ENCODE measurements at regions of chr16 and their contacts with region 1.

Region 1: DNA sequence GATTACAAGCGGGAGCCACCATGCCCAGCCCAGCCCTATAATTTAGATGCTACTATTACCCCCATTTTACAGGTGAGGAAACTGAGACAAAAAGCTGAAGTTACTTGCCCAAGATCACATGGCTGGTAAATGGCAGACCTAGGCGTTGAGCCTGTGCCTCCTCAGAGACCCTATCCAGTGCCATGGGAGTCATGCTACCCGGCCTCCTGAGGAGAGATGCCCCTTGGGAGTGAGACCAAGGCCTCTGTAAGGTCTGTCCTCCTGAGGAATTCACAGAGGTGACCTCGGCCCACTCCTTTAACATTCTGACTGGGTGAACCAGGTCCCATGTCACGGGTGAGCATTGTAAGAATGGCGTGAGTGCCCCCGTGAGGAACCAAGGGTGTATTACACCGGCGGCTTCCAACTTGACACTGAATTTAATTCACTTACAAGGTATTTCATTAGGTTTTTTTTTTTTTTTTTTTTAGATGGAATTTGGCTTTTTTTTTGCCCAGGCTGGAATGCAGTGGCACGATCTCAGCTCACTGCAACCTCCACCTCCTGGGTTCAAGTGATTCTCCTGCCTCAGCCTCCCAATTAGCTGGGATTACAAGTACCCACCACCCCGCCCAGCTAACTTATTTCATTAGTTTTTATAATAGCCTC is 95.7 kb downstream of the ABCC6 start:
- DNase-seq: peak; percentile 55 to 83 (median 77)
- ATAC-seq: peak; percentile 81 to 86
- H3K4me3 ChIP-seq: no peak overlapping the region
- H3K27ac ChIP-seq: no peak overlapping the region
- H3K4me1 ChIP-seq: no peaks in the 10 kb centered on the region
- H3K27me3 ChIP-seq: no peaks in the 10 kb centered on the region

Region 2: GRCh38 chr16:15434425-15435215 is 693.0 kb before region 1 on chr16 and contains the start of gene BMERB1:
- intact Hi-C with region 1: no loop called
- DNase-seq: peak; percentile 86 to 94 (median 93)
- ATAC-seq: peak; percentile 96 to 97
- H3K4me3 ChIP-seq: peak within 1 kb of the TSS; percentile 69
- H3K27ac ChIP-seq: peak within 1 kb of the TSS; percentile 22
- H3K4me1 ChIP-seq: peaks cover 2% of the 10 kb centered on the region
- H3K27me3 ChIP-seq: no peaks in the 10 kb centered on the region
- total RNA-seq, gene BMERB1: 54.7 to 74.7 (median 60.8) TPM

Region 3: GRCh38 chr16:15874745-15875314 is 252.8 kb before region 1 on chr16:
- intact Hi-C with region 1: loop called (anchors 5 kb)
- DNase-seq: peak; percentile 49 to 77 (median 60)
- ATAC-seq: peak; percentile 82 to 84
- H3K4me3 ChIP-seq: no peak overlapping the region
- H3K27ac ChIP-seq: peak overlapping the region; percentile 85
- H3K4me1 ChIP-seq: peaks cover 2% of the 10 kb centered on the region
- H3K27me3 ChIP-seq: no peaks in the 10 kb centered on the region

Region 4: DNA sequence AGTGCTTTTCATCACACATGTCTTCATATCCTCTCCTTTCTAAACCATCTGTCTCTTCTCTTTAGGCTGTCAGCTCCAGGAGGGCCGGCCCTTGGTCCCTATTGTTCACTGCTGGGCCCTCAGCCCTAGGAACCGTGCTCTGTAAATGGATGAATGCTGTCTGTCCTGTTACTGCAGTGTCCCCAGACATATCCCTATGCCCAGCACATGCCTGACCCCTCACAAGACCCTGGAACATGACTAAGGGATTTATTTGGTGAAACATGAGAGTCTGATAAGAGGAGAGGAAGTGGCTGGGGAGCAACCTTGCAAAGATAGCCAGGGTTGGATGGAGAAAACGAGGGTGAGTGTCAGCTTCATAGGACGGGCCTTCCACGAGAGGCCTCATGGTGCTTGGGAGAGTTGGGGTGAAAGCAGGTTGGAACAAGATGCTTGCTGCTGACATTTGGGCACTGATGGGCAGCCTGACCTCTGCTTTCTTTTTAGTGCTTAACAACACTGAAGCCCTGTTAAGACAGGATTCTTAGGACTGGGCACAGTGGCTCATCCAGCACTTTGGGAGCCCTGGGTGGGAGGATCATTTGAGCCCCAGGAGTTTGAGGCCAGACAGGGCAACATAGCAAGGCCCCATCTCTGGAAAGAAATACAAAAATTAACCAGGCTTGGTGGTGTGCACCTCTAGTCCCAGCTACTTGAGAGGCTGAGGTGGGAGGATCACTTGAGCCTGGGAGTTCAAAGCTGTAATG is 139.2 kb before region 1 on chr16:
- intact Hi-C with region 1: no loop called
- DNase-seq: no peak
- ATAC-seq: peak; percentile 42 to 62
- H3K4me3 ChIP-seq: no peak overlapping the region
- H3K27ac ChIP-seq: peak overlapping the region; percentile 89
- H3K4me1 ChIP-seq: peaks cover 17% of the 10 kb centered on the region
- H3K27me3 ChIP-seq: no peaks in the 10 kb centered on the region

Region 5: DNA sequence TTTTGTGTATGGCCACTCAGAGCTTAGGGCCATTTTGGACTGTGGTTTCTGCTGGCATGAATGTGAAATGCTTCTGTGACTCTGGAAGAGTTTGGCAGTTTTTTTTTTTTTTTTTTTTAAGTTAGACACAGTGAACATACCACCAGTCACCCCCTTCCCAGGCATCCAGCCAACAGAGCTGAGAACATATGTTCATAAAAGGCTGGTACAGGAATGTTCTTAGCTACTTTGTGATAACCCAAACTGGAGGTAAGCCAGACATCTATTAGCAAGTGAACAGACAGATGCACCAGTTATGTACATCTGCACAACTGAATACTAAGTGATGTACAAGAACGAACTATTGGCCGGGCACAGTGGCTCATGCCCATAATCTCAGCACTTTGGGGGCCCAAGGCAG is 85.5 kb before region 1 on chr16:
- intact Hi-C with region 1: no loop called
- DNase-seq: peak in 2 of 3 donors; percentile 40 to 87
- ATAC-seq: peak; percentile 49 to 76
- H3K4me3 ChIP-seq: no peak overlapping the region
- H3K27ac ChIP-seq: peak overlapping the region; percentile 47
- H3K4me1 ChIP-seq: peaks cover 6% of the 10 kb centered on the region
- H3K27me3 ChIP-seq: no peaks in the 10 kb centered on the region

Region 6: DNA sequence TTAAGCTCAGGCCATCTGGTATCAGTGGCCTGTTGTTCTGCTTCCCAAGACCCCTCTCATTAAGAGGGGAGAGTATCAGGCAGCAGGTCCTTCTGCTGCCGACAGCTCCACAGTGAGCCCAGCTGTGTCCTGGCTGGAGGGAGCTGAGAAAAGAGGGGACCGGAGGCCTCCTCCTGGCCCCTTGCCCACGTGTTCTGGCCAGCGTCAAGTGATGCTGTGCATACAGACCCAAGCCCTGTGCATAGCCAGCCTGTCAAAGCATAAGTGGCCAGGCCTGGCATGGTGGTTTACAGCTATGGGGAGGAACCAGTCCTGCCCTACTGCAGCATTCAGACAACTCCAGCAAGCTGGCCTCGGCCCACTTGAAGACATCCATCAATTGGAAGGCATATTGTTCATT is 47.7 kb after region 1 on chr16:
- intact Hi-C with region 1: no loop called
- DNase-seq: no peak
- ATAC-seq: peak; percentile 26 to 64
- H3K4me3 ChIP-seq: no peak overlapping the region
- H3K27ac ChIP-seq: no peak overlapping the region
- H3K4me1 ChIP-seq: no peaks in the 10 kb centered on the region
- H3K27me3 ChIP-seq: no peaks in the 10 kb centered on the region